SK-N-SH (cell line): ENCODE measurements at regions of chr3 and their contacts with region 1.

Region 1: GRCh38 chr3:13091898-13092611 is 18.8 kb upstream of the IQSEC1 start:
- DNase-seq: peak; percentile 83
- H3K4me3 ChIP-seq: no peak overlapping the region; a peak in 1 of 4 replicates
- H3K27ac ChIP-seq: no peak overlapping the region
- H3K4me1 ChIP-seq: peaks cover 0 to 16% of the 10 kb centered on the region in 2 experiments; a peak in 1 of 4 replicates
- H3K27me3 ChIP-seq: no peaks in the 10 kb centered on the region
- CTCF ChIP-seq: peak; percentile 86
- EP300 ChIP-seq: no peak
- RAD21 ChIP-seq: peak; percentile 93

Region 2: DNA sequence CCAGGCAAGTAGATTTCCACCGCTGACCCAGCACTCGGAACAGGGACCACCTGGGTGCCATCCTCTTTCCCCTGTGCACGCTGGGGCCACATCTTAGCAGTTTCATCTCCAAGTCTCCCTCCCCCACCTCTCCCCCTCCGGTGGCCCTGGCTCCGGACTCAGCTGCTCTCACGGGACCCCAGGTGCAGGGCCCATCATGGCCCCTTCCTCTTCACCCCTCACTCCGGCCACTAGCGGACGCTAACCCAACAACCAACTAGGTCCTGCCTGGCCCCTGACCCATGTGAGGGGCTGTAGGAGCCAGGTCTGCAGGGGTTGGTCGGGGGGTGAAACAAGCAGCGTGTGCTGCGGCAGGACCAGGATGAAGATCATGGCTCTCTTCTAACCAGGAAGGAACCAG is 12.5 kb after region 1 on chr3:
- CTCF ChIA-PET with region 1: interaction called, 30 read pairs
- POLR2A ChIA-PET with region 1: no interaction called
- DNase-seq: no peak
- H3K4me3 ChIP-seq: no peak overlapping the region
- H3K27ac ChIP-seq: no peak overlapping the region
- H3K4me1 ChIP-seq: peaks cover 0 to 4% of the 10 kb centered on the region in 2 experiments; a peak in 1 of 4 replicates
- H3K27me3 ChIP-seq: no peaks in the 10 kb centered on the region
- CTCF ChIP-seq: no peak
- EP300 ChIP-seq: no peak
- RAD21 ChIP-seq: no peak

Region 3: DNA sequence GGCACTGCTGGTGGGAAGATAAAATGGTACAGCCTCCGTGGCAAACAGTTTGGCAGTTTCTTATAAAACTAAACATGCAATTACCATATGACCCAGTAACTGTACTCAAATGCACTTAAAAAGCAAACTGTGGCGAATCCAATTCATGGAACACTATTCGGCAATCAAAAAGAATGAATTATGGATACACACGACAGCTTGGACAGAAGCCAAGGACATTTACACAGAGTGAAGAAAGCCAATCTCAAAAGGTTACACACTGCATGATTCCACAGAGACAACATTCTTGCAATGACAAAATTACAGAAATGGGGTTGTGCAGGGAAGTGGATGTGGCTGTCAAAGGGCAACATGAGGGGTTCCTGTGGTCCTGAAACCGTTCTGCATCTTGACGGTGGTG is 103.3 kb after region 1 on chr3:
- CTCF ChIA-PET with region 1: interaction called, 25 read pairs
- POLR2A ChIA-PET with region 1: no interaction called
- DNase-seq: no peak
- H3K4me3 ChIP-seq: no peak overlapping the region
- H3K27ac ChIP-seq: no peak overlapping the region
- H3K4me1 ChIP-seq: peaks cover 0 to 19% of the 10 kb centered on the region in 2 experiments; a peak in 1 of 4 replicates
- H3K27me3 ChIP-seq: no peaks in the 10 kb centered on the region; the same call in 1 of the 2 replicates
- CTCF ChIP-seq: no peak
- EP300 ChIP-seq: no peak
- RAD21 ChIP-seq: no peak

Region 4: DNA sequence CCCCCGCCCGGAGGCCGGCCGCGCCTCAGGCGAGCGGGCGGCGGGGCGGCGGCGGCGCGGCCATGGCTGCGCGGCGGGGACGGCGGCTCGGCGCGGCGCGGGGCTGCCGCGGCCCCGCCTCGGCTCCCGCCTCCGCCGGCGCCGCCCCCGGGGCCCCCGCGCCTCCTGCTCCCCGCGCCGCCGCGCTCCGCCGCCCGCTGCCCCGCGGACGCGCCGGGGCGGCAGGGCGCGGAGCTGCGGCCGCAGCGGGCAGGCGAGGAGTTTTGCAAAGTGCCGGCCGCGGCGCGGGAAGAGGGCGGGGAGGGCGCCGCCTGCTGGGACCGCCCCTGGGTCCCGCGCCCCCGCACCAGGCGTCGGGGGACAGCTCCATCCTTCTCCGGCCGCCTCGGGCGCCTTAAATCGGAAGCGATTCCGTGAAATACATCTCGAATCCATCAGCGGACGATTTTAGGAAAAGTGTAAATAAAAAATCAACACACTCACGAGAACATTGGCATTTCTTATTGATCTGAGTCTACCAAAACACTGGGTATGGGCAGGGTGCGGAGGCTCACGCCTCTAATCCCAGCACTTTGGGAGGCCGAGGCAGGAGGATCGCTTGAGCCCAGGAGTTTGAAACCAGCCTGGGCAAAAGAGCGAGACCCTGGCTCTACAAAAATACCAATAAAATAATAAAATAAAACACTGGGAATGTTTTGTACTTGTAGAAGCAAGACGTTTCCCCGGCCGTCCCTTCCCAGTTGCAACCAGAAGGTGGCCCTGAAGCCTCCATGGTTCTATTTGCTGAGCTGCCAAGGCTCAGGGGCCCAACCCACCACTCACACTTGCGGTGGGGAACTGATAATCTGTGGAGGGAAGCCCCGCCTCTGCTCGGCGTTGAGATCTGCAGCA is 191.2 kb after region 1 on chr3:
- CTCF ChIA-PET with region 1: interaction called, 16 read pairs
- POLR2A ChIA-PET with region 1: no interaction called
- DNase-seq: peak; percentile 91
- H3K4me3 ChIP-seq: peak overlapping the region; percentile 36 to 47; a peak in 3 of 4 replicates
- H3K27ac ChIP-seq: no peak overlapping the region
- H3K4me1 ChIP-seq: no peaks in the 10 kb centered on the region
- H3K27me3 ChIP-seq: peaks cover 10% of the 10 kb centered on the region
- CTCF ChIP-seq: no peak; the same call in 1 of the 2 replicates
- EP300 ChIP-seq: no peak
- RAD21 ChIP-seq: peak; percentile 43

Region 5: GRCh38 chr3:13452490-13453335 is 360.7 kb after region 1 on chr3:
- CTCF ChIA-PET with region 1: interaction called, 54 read pairs
- POLR2A ChIA-PET with region 1: no interaction called
- DNase-seq: peak; percentile 59
- H3K4me3 ChIP-seq: peak overlapping the region; percentile 12 to 66; a peak in 3 of 4 replicates
- H3K27ac ChIP-seq: peak overlapping the region; percentile 27 to 31; a peak in 2 of 4 replicates
- H3K4me1 ChIP-seq: no peaks in the 10 kb centered on the region; a peak in 1 of 4 replicates
- H3K27me3 ChIP-seq: no peaks in the 10 kb centered on the region
- CTCF ChIP-seq: peak; percentile 75
- EP300 ChIP-seq: no peak
- RAD21 ChIP-seq: peak; percentile 82